Heart left ventricle (tissue), 16 donors: ENCODE measurements at regions of chr18 and their contacts with region 1.

Region 1: GRCh38 chr18:9827641-9828505 is 57.9 kb upstream of the TXNDC2 start:
- DNase-seq: peak in 2 of 5 donors; percentile 55 to 57
- ATAC-seq: peak in 3 of 4 donors; percentile 2 to 60 (median 18)
- H3K4me3 ChIP-seq: no peak overlapping the region
- H3K27ac ChIP-seq: peak overlapping the region in 6 of 12 donors; percentile 2 to 90 (median 20)
- H3K4me1 ChIP-seq: peaks cover 0 to 66% (median 24%) of the 10 kb centered on the region in 12 donors
- H3K27me3 ChIP-seq: no peaks in the 10 kb centered on the region
- CTCF ChIP-seq: no peak
- POLR2A ChIP-seq: no peak

Region 2: GRCh38 chr18:9643549-9643948 is 184.3 kb before region 1 on chr18:
- intact Hi-C with region 1: no loop called
- DNase-seq: peak in 3 of 5 donors; percentile 15 to 35 (median 28)
- ATAC-seq: peak; percentile 85 to 98 (median 94)
- H3K4me3 ChIP-seq: no peak overlapping the region
- H3K27ac ChIP-seq: peak overlapping the region in 8 of 12 donors; percentile 26 to 66 (median 47)
- H3K4me1 ChIP-seq: peaks cover 0 to 14% (median 2%) of the 10 kb centered on the region in 12 donors
- H3K27me3 ChIP-seq: no peaks in the 10 kb centered on the region
- CTCF ChIP-seq: no peak
- POLR2A ChIP-seq: no peak

Region 3: GRCh38 chr18:9731380-9731779 is 96.5 kb before region 1 on chr18:
- intact Hi-C with region 1: no loop called
- DNase-seq: no peak
- ATAC-seq: no peak
- H3K4me3 ChIP-seq: no peak overlapping the region
- H3K27ac ChIP-seq: no peak overlapping the region
- H3K4me1 ChIP-seq: no peaks in the 10 kb centered on the region
- H3K27me3 ChIP-seq: no peaks in the 10 kb centered on the region
- CTCF ChIP-seq: no peak
- POLR2A ChIP-seq: no peak

Region 4: GRCh38 chr18:9838144-9838877 is 10.4 kb after region 1 on chr18:
- intact Hi-C with region 1: loop called in 1 of 10 experiments (anchors 2 kb)
- DNase-seq: peak in 4 of 5 donors; percentile 52 to 75 (median 68)
- ATAC-seq: peak; percentile 81 to 93 (median 90)
- H3K4me3 ChIP-seq: peak overlapping the region in 1 of 12 donors; percentile 1
- H3K27ac ChIP-seq: peak overlapping the region in 10 of 12 donors; percentile 56 to 90 (median 73)
- H3K4me1 ChIP-seq: peaks cover 0 to 43% (median 9%) of the 10 kb centered on the region in 12 donors
- H3K27me3 ChIP-seq: no peaks in the 10 kb centered on the region
- CTCF ChIP-seq: no peak
- POLR2A ChIP-seq: no peak

Region 5: GRCh38 chr18:9876867-9877654 is 49.2 kb after region 1 on chr18:
- intact Hi-C with region 1: no loop called
- DNase-seq: peak in 1 of 5 donors; percentile 33
- ATAC-seq: peak in 3 of 4 donors; percentile 73 to 90 (median 87)
- H3K4me3 ChIP-seq: peak overlapping the region in 8 of 12 donors; percentile 1 to 43 (median 32)
- H3K27ac ChIP-seq: peak overlapping the region in 11 of 12 donors; percentile 2 to 77 (median 45)
- H3K4me1 ChIP-seq: peaks cover 0 to 13% (median 2%) of the 10 kb centered on the region in 12 donors
- H3K27me3 ChIP-seq: no peaks in the 10 kb centered on the region
- CTCF ChIP-seq: no peak
- POLR2A ChIP-seq: no peak

Region 6: GRCh38 chr18:9925369-9925768 is 97.5 kb after region 1 on chr18:
- intact Hi-C with region 1: loop called in 1 of 10 experiments (anchors 10 kb)
- DNase-seq: no peak
- ATAC-seq: peak in 2 of 4 donors; percentile 31 to 55
- H3K4me3 ChIP-seq: no peak overlapping the region
- H3K27ac ChIP-seq: peak overlapping the region in 7 of 12 donors; percentile 2 to 51 (median 18)
- H3K4me1 ChIP-seq: peaks cover 3 to 99% (median 87%) of the 10 kb centered on the region in 12 donors
- H3K27me3 ChIP-seq: no peaks in the 10 kb centered on the region
- CTCF ChIP-seq: no peak
- POLR2A ChIP-seq: no peak

Region 7: GRCh38 chr18:10169064-10169562 is 341.2 kb after region 1 on chr18:
- intact Hi-C with region 1: no loop called
- DNase-seq: no peak
- ATAC-seq: no peak
- H3K4me3 ChIP-seq: no peak overlapping the region
- H3K27ac ChIP-seq: no peak overlapping the region
- H3K4me1 ChIP-seq: peaks cover 0 to 8% (median 2%) of the 10 kb centered on the region in 12 donors
- H3K27me3 ChIP-seq: no peaks in the 10 kb centered on the region
- CTCF ChIP-seq: no peak
- POLR2A ChIP-seq: no peak